ENCODE measurements at regions of chr6 and their contacts with region 1.

Region 1: GRCh38 chr6:138817822-138818308 is 22.0 kb downstream of the ECT2L start:
- DNase-seq: no peak
- H3K4me3 ChIP-seq: no peak overlapping the region
- H3K4me3 Mint-ChIP-seq: no peak overlapping the region
- H3K27ac ChIP-seq: no peak overlapping the region
- H3K27ac Mint-ChIP-seq: peak overlapping the region in 1 of 7 donors; percentile 55
- H3K4me1 ChIP-seq: no peaks in the 10 kb centered on the region
- H3K4me1 Mint-ChIP-seq: peaks cover 3 to 10% (median 7%) of the 10 kb centered on the region in 4 donors
- H3K27me3 ChIP-seq: no peaks in the 10 kb centered on the region
- H3K27me3 Mint-ChIP-seq: peaks cover 0 to 2% of the 10 kb centered on the region in 2 donors

Region 2: DNA sequence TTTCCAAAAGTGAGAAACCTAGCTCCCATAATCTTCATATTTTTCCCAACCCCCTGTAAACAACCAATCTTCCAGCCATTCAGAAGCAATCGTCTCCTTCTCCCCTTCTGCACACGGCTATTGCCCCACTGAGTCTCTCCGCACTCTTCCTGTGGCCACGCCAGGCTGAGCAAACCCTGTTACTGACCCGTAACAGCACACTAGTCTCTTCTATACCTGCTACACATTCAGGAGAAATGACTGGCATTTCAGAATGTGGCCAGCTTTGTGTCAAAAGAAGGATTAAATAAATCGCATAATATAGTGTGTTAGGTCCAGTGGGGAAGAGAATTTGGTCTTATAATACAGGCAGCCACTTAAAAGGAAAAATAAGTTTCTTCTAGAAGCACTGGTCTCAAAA is 19.4 kb after region 1 on chr6:
- CTCF ChIA-PET with region 1: no interaction called
- POLR2A ChIA-PET with region 1: no interaction called
- intact Hi-C with region 1: no loop called
- DNase-seq: no peak
- H3K4me3 ChIP-seq: no peak overlapping the region
- H3K4me3 Mint-ChIP-seq: no peak overlapping the region
- H3K27ac ChIP-seq: no peak overlapping the region
- H3K27ac Mint-ChIP-seq: no peak overlapping the region
- H3K4me1 ChIP-seq: no peaks in the 10 kb centered on the region
- H3K4me1 Mint-ChIP-seq: no peaks in the 10 kb centered on the region
- H3K27me3 ChIP-seq: no peaks in the 10 kb centered on the region
- H3K27me3 Mint-ChIP-seq: peaks cover 0 to 3% of the 10 kb centered on the region in 2 donors

Region 3: GRCh38 chr6:139050770-139051313 is 233.0 kb after region 1 on chr6:
- CTCF ChIA-PET with region 1: interaction called, 3 read pairs
- POLR2A ChIA-PET with region 1: no interaction called
- intact Hi-C with region 1: loop called (anchors 1 kb)
- DNase-seq: no peak
- H3K4me3 ChIP-seq: no peak overlapping the region
- H3K4me3 Mint-ChIP-seq: no peak overlapping the region
- H3K27ac ChIP-seq: no peak overlapping the region
- H3K27ac Mint-ChIP-seq: no peak overlapping the region
- H3K4me1 ChIP-seq: no peaks in the 10 kb centered on the region
- H3K4me1 Mint-ChIP-seq: peaks cover 0 to 2% (median under 1%) of the 10 kb centered on the region in 4 donors
- H3K27me3 ChIP-seq: no peaks in the 10 kb centered on the region
- H3K27me3 Mint-ChIP-seq: peaks cover 0 to 1% of the 10 kb centered on the region in 2 donors